GM10248 (cell line): ENCODE measurements at regions of chr11 and their contacts with region 1.

Region 1: GRCh38 chr11:7665473-7666291 is 7.6 kb downstream of the CYB5R2 start:
- DNase-seq: peak; percentile 92
- CTCF ChIP-seq: peak; percentile 91

Region 2: GRCh38 chr11:7353100-7353499 is 312.6 kb before region 1 on chr11:
- CTCF ChIA-PET with region 1: interaction called, 17 read pairs
- POLR2A ChIA-PET with region 1: no interaction called
- DNase-seq: peak; percentile 51
- CTCF ChIP-seq: peak; percentile 67

Region 3: DNA sequence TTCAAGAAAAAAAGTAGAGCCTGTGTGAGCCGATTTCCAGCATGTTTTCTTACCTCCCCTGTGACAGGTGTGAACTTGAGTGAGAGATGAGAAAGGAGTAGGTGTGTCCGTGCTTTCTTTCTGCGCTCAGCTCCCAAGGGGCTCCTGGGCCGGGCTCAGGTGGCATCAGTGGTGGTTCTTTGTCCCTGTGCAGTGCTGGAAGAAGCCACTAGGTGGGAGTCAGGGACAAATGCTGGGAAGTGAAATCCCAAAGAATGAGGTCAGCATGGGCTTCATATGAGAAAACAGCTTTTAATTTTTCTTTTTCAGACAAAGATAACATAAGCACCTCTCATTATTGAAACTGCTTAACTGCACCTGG is 94.1 kb before region 1 on chr11:
- CTCF ChIA-PET with region 1: interaction called, 10 read pairs
- POLR2A ChIA-PET with region 1: no interaction called
- DNase-seq: peak; percentile 42
- CTCF ChIP-seq: peak; percentile 63

Region 4: DNA sequence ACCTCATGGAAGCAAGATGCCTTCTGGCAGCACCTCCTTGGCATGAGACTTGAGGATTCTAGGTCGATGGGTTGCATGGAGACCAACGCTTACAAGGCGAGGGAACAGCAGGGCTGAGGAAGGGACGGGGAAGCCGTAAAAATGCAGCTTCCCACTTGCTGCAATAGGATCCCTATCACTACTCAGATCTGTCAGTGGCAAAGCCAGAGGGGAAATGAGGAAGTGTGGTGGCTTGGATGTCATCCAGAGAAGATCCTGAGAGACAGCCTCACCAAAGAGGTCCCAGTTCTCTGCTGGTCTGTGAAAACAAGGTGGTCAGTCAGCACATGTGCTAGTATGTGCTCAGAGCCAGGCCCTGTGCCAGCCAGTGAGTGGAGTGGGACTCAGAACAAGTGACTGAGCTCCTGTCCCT is 14.5 kb before region 1 on chr11:
- CTCF ChIA-PET with region 1: interaction called, 25 read pairs
- POLR2A ChIA-PET with region 1: no interaction called
- DNase-seq: no peak
- CTCF ChIP-seq: no peak

Region 5: DNA sequence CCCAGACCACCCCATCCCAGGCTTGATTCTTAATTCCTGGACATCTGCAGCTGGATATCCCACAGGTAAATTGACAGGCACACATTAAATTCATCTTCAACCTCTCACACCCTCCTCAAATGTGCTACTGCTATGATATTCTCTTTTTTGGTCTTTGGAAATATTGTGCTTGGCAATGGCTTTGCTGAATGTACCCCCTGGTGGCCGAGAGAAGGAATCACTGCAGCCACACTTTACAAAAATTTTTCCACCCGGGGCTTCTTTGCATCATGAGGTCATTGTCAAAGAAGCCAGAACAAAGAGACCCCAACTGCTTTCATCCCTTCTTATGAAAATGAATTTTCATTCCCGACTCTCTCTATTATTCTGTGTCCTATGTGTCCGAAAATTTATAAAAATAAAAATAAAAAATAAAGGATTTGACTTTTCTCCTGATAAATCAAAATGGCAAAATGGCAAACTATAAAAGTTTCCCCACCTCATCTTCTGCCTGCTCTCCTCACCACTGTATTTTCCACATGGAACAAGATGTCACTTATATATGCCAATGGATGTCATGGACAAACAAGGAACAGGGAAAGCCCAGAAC is 22.6 kb after region 1 on chr11:
- CTCF ChIA-PET with region 1: interaction called, 22 read pairs
- POLR2A ChIA-PET with region 1: no interaction called
- DNase-seq: peak; percentile 39
- CTCF ChIP-seq: peak; percentile 72